Mammary epithelial cell (primary cell): ENCODE measurements at regions of chr5 and their contacts with region 1.

Region 1: DNA sequence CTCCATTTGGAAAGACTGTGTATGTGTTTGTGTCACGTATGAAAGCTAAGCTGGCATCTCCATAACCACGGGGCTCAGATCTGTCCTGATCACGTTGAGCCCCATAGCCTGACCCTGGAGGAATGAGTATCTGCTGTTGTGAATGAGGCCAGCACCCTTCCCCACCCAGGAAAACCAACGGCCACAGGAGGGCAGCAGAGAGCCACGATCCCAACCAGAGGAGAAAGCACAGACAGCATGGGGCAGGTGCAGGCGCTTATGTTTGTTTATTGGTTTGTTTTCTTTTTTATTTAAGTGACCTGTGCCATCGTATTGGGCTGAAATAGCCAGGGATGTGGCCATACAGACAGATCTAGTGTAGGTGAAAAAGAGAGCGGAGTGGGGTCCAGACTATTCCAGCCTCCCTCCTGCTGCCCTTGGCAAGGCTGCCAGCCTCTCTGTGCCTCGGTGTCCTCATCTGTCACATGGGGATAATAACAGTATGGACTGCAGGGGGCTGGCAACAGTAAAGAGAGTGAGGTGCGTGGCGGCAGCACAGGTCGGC is 12.0 kb downstream of the OR2V2 start:
- DNase-seq: peak; percentile 66
- H3K4me3 ChIP-seq: no peak overlapping the region
- H3K27ac ChIP-seq: no peak overlapping the region
- H3K4me1 ChIP-seq: peaks cover 13% of the 10 kb centered on the region
- H3K27me3 ChIP-seq: no peaks in the 10 kb centered on the region
- CTCF ChIP-seq: peak; percentile 89 to 91

Region 2: GRCh38 chr5:180868960-180869359 is 290.4 kb before region 1 on chr5:
- CTCF ChIA-PET with region 1: no interaction called
- dilution Hi-C with region 1: no loop called
- in situ Hi-C with region 1: no loop called
- intact Hi-C with region 1: loop called (anchors 1 kb)
- DNase-seq: peak; percentile 68
- H3K4me3 ChIP-seq: no peak overlapping the region
- H3K27ac ChIP-seq: no peak overlapping the region
- H3K4me1 ChIP-seq: no peaks in the 10 kb centered on the region
- H3K27me3 ChIP-seq: no peaks in the 10 kb centered on the region
- CTCF ChIP-seq: peak; percentile 78 to 93

Region 3: DNA sequence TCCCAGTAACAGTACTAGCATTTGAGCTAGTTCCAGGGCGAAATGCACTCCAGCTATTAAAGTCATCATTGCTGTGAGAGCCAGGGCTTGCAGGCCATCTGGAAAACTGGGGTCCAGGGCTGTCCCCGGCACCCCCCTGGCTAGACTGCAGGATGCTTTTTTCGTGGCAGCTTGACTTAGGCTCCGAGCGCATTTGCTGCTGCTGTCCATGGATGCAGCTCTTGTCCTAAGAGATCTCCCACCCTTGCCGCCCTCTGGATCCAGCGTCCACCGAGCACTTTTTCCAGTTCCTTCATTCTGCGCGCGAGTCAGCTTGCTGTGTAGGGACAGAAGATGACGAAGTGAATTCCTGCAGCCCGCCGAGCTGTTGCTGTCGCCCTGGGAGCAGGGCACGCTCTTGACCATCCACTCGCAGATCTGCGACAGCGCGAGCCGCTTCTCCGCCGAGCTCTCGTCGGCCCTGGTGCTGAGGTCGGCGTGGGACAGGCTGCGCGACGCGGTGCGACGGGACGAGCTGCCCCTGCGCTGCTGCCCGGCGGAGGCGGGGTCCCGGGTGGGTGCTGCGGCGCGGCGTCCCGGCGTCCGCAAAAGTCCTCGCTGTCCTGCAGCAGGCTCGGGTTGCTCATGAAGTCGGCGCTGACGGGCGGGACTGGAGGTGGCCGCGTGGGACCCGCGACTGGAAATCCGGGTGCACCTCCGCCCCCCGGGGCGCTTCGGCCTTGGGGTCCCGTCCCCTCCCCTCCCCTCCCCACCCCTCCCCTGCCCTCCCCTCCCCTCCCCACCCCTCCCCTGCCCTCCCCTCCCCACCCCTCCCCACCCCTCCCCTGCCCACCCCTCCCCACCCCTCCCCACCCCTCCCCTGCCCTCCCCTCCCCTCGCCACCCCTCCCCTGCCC is 59.0 kb before region 1 on chr5:
- CTCF ChIA-PET with region 1: no interaction called
- dilution Hi-C with region 1: no loop called
- in situ Hi-C with region 1: no loop called
- intact Hi-C with region 1: loop called (anchors 10 kb)
- DNase-seq: no peak
- H3K4me3 ChIP-seq: peak overlapping the region in 1 of 3 experiments; percentile 34
- H3K27ac ChIP-seq: no peak overlapping the region
- H3K4me1 ChIP-seq: no peaks in the 10 kb centered on the region
- H3K27me3 ChIP-seq: peaks cover 2% of the 10 kb centered on the region
- CTCF ChIP-seq: no peak

Region 4: DNA sequence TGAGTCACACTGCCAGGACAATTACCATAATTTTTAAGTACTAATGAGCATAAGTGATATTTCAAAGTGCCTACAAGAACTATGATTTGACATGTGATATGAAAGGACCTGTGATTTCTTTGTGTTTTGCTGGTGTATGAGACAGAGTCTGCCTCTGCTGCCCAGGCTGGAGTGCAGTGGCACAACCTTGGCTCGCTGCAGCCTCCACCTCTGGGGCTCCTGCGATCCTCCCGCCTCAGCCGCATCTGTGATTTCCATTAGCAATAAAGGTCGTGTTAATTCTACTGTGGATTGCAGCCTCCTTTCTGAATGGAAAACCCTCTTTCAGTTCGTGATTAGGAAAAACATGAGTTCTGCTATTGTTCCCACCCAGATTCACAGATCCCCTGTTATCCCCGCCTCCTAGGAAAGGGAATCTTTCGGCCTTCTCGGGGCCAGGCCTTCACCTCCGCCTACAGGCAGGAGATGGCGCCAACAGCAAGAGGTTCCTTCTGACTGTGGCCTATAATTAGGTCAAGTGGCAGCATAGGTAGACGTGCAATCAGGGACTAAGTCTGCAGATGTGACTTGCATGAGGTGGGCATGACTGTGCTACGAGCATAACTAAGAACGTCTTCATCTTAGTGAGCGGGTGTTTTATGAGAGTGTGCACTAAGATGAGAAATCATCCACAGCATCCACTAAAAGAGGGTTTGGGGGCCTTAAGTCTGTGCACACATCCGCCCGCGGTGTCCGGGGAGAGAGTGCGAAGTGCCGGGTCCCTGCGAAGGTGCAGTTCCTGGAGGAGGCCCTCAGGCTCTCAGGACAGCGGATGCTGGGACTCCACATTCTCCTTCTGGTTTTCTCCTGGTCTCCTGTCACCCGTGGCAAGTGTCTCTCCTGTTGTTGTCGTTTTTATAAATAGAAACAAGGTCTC is 22.6 kb after region 1 on chr5:
- CTCF ChIA-PET with region 1: no interaction called
- dilution Hi-C with region 1: no loop called
- in situ Hi-C with region 1: no loop called
- intact Hi-C with region 1: loop called (anchors 1 kb)
- DNase-seq: peak; percentile 56
- H3K4me3 ChIP-seq: no peak overlapping the region
- H3K27ac ChIP-seq: no peak overlapping the region
- H3K4me1 ChIP-seq: peaks cover 3% of the 10 kb centered on the region
- H3K27me3 ChIP-seq: no peaks in the 10 kb centered on the region
- CTCF ChIP-seq: peak; percentile 82 to 83

Region 5: DNA sequence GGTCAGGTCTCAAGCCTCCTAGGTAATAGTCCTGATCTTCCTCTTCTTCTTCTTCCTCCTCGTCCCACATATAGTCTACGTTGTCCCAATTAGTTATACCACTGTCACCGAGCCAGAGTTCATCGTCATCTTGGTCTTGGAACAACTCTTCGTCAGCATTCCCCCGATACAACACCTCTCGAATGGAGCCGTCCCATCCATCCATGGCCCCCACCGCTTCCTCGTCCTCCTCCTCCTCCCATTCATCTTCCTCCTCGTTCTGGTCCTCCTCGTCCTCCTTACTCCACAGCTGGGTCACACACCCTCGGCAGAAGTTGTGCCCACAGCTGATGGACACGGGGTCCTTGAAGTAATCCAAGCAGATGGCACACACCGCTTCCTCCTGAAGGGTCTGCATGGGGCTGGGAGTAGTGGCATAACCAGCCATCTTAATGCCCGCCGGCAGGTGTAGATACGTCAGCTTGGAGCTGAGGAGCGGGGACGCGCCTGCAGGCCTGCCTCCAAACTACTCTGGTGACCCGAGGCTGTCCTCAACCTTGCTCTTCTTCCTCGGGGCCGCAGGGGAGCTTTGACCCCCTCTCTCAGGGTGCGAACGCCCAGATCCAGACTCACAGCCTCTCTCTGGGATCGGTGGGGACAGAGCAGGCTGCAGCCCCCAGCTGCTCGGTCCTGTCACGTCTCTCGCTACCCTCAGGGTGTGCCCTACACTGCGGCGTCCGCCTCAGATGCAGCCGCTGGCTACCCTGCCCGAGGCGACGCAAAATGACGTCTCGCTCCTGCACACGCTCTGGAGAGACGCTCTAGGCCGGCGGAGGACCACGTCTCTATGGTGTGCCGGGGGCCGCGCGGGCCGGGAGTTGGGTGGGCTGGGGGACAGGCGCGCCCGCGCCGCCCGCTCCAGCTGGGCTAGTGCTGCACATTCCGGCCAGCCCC is 101.3 kb after region 1 on chr5 and contains the start of gene TRIM52:
- CTCF ChIA-PET with region 1: no interaction called
- dilution Hi-C with region 1: no loop called
- in situ Hi-C with region 1: no loop called
- intact Hi-C with region 1: no loop called
- DNase-seq: peak; percentile 84
- H3K4me3 ChIP-seq: peak within 1 kb of the TSS; percentile 58 to 78 (median 73)
- H3K27ac ChIP-seq: peak within 1 kb of the TSS; percentile 94
- H3K4me1 ChIP-seq: peaks cover 16% of the 10 kb centered on the region
- H3K27me3 ChIP-seq: no peaks in the 10 kb centered on the region
- CTCF ChIP-seq: no peak
- total RNA-seq, gene TRIM52: 5.7 to 6.0 TPM